A673 (cell line): ENCODE measurements at regions of chr18 and their contacts with region 1.

Region 1: GRCh38 chr18:49520661-49521145 is 33.7 kb upstream of the C18orf32 start:
- DNase-seq: peak; percentile 69
- H3K4me3 ChIP-seq: no peak overlapping the region
- H3K27ac ChIP-seq: peak overlapping the region; percentile 71
- H3K4me1 ChIP-seq: peaks cover 37% of the 10 kb centered on the region
- H3K27me3 ChIP-seq: no peaks in the 10 kb centered on the region
- CTCF ChIP-seq: no peak

Region 2: GRCh38 chr18:49178736-49179135 is 342.0 kb before region 1 on chr18:
- CTCF ChIA-PET with region 1: no interaction called
- POLR2A ChIA-PET with region 1: no interaction called
- intact Hi-C with region 1: no loop called
- DNase-seq: peak; percentile 35
- H3K4me3 ChIP-seq: no peak overlapping the region
- H3K27ac ChIP-seq: no peak overlapping the region
- H3K4me1 ChIP-seq: peaks cover 13% of the 10 kb centered on the region
- H3K27me3 ChIP-seq: no peaks in the 10 kb centered on the region
- CTCF ChIP-seq: peak; percentile 72

Region 3: DNA sequence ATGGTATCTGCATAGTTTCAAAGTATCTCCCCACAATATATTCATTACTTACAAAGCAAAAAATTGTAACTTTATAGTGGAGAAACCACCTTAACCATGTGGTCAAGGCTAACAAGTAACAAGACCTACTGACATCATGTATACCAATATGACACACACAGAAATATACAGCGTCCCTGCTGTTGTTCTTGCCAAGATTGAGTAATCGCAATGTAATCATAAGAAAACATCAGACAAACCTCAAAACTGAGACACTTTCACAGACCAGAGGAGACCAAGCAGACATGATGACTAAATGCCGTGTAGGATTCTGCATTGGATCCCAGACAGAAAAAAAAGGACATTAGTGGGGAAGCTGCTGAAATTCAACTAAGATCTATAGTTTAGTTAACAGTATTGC is 169.6 kb after region 1 on chr18:
- CTCF ChIA-PET with region 1: no interaction called
- POLR2A ChIA-PET with region 1: no interaction called
- intact Hi-C with region 1: no loop called
- DNase-seq: no peak
- H3K4me3 ChIP-seq: no peak overlapping the region
- H3K27ac ChIP-seq: no peak overlapping the region
- H3K4me1 ChIP-seq: peaks cover 14% of the 10 kb centered on the region
- H3K27me3 ChIP-seq: no peaks in the 10 kb centered on the region
- CTCF ChIP-seq: no peak

Region 4: GRCh38 chr18:49728542-49728941 is 207.8 kb after region 1 on chr18:
- CTCF ChIA-PET with region 1: no interaction called
- POLR2A ChIA-PET with region 1: no interaction called
- intact Hi-C with region 1: loop called (anchors 10 kb)
- DNase-seq: peak; percentile 83
- H3K4me3 ChIP-seq: no peak overlapping the region
- H3K27ac ChIP-seq: no peak overlapping the region
- H3K4me1 ChIP-seq: peaks cover 50% of the 10 kb centered on the region
- H3K27me3 ChIP-seq: no peaks in the 10 kb centered on the region
- CTCF ChIP-seq: peak; percentile 84